ENCODE measurements at regions of chr13 and their contacts with region 1.

Region 1: GRCh38 chr13:43846496-43846895 is 33.0 kb downstream of the CCDC122 start:
- DNase-seq: no peak
- ATAC-seq: no peak

Region 2: GRCh38 chr13:43698758-43699157 is 147.7 kb before region 1 on chr13:
- intact Hi-C with region 1: no loop called
- DNase-seq: no peak
- ATAC-seq: peak; percentile 65

Region 3: DNA sequence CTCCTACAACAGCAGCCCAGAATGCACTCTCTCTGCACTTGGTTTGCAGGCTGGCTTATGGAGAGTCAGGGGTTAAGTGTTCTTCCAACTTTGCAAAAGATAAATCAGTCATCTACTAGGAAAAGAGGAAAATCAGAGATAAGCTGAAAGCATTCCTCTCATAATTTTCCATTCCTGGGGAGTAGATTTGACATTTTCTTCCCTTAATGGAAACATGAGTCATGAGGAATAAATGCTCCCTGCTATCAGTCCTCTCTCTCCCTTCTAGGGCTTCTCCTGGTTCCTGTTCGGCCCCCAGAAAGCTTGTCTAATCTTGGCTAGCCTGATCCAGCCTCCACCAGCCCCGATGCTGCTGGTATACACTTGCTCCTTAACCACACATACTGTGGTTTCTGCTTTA is 31.3 kb before region 1 on chr13:
- intact Hi-C with region 1: loop called (anchors 2 kb)
- DNase-seq: no peak
- ATAC-seq: no peak

Measured in sciatic nerve (tissue), 2 donors.